Panc1 (cell line): ENCODE measurements at regions of chr6 and their contacts with region 1.

Region 1: GRCh38 chr6:109713097-109713496 is 22.0 kb downstream of the FIG4 start:
- DNase-seq: no peak
- ATAC-seq: no peak
- H3K4me3 ChIP-seq: no peak overlapping the region
- H3K27ac ChIP-seq: no peak overlapping the region
- H3K4me1 ChIP-seq: no peaks in the 10 kb centered on the region
- H3K27me3 ChIP-seq: no peaks in the 10 kb centered on the region
- CTCF ChIP-seq: no peak

Region 2: GRCh38 chr6:109420796-109421583 is 292.1 kb before region 1 on chr6:
- CTCF ChIA-PET with region 1: no interaction called
- POLR2A ChIA-PET with region 1: no interaction called
- in situ Hi-C with region 1: no loop called
- intact Hi-C with region 1: no loop called
- DNase-seq: no peak
- ATAC-seq: peak; percentile 69
- H3K4me3 ChIP-seq: no peak overlapping the region
- H3K27ac ChIP-seq: no peak overlapping the region
- H3K4me1 ChIP-seq: peaks cover 23% of the 10 kb centered on the region
- H3K27me3 ChIP-seq: no peaks in the 10 kb centered on the region
- CTCF ChIP-seq: no peak

Region 3: DNA sequence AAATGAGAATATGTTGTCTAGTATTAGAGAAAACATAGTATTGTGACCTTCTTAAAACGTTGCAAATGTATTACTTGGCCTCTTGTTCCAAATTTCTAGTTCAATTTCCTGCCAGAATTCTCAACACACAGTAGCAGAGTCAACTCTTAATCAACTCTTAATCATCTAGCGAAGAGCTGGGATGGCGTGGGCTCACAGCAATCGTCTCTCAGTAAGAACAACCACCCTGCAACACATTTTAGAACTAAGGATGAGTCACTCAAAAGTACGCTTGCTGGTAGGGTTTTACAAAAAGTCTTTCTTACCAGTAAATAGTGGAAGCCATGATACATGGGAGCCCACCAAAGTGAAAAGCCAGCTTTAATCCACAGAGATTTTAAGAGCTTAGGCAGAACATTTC is 289.6 kb after region 1 on chr6:
- CTCF ChIA-PET with region 1: no interaction called
- POLR2A ChIA-PET with region 1: interaction called, 10 read pairs
- in situ Hi-C with region 1: no loop called
- intact Hi-C with region 1: no loop called
- DNase-seq: no peak
- ATAC-seq: no peak
- H3K4me3 ChIP-seq: no peak overlapping the region
- H3K27ac ChIP-seq: no peak overlapping the region
- H3K4me1 ChIP-seq: no peaks in the 10 kb centered on the region
- H3K27me3 ChIP-seq: peaks cover 18% of the 10 kb centered on the region
- CTCF ChIP-seq: no peak